Calu3 (cell line): ENCODE measurements at regions of chrX and their contacts with region 1.

Region 1: DNA sequence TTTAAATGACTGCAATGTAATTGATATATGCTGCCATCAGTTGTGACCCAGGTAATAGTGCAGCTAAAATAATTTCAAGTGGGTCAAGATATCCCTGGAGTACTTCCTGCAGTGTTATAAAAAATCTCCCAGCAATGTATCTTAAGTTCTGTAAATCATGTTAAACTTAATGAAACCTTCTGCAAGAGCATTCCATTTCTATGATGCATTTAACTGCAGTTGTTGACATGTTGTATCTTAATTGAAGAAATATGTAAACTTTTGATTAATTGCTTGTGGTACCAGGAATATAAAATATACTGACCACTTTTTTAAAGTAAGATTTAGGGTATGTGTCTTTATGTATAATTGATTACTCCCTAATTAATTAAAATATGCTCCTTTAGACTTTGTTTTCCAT is 213.6 kb downstream of the AFF2 start:
- DNase-seq: no peak
- H3K4me3 Mint-ChIP-seq: no peak overlapping the region
- H3K27ac Mint-ChIP-seq: no peak overlapping the region
- H3K4me1 Mint-ChIP-seq: no peaks in the 10 kb centered on the region
- H3K27me3 Mint-ChIP-seq: no peaks in the 10 kb centered on the region
- CTCF ChIP-seq: no peak

Region 2: DNA sequence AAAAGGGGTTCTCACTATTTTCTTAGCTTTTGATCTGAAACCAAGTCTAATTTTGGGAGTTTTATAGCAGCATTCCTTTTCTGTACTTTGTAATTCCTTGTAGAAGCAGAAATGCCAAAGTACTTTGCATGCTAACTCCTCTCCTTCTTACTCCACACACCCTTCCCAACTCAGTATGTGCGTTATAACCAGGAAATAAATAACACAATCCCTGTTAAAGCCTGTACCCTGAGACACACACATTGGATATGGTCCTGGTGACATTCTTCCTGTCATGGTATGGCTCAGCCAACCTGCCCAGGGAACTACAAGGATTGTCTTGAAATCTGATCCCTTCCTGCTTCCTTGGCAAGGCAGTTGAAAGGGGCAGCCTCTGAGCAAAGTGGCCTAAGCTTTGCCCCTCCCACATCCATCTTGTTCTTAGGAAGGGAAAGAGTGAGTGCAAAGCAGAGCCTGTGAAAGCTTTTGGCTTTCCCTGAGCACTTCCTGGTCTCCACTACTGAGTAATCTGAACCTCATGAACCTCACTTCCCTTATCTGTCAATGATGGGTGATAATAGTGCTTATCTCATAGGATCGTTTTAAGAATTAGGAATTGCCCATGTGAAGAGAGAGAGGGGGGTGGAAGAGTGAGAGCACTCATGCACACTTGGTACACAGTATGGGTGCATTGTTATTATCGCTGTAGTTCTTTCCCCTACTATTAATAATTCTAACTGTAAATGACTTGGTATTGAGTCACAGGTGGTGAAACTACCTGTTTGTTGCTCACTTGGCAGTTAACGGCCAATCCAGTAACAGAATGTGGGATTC is 104.3 kb before region 1 on chrX:
- CTCF ChIA-PET with region 1: no interaction called
- intact Hi-C with region 1: loop called (anchors 10 kb)
- DNase-seq: peak; percentile 70
- H3K4me3 Mint-ChIP-seq: no peak overlapping the region
- H3K27ac Mint-ChIP-seq: peak overlapping the region; percentile 88
- H3K4me1 Mint-ChIP-seq: peaks cover 18% of the 10 kb centered on the region
- H3K27me3 Mint-ChIP-seq: no peaks in the 10 kb centered on the region
- CTCF ChIP-seq: no peak